Vagina (tissue), 2 donors: ENCODE measurements at regions of chr17 and their contacts with region 1.

Region 1: DNA sequence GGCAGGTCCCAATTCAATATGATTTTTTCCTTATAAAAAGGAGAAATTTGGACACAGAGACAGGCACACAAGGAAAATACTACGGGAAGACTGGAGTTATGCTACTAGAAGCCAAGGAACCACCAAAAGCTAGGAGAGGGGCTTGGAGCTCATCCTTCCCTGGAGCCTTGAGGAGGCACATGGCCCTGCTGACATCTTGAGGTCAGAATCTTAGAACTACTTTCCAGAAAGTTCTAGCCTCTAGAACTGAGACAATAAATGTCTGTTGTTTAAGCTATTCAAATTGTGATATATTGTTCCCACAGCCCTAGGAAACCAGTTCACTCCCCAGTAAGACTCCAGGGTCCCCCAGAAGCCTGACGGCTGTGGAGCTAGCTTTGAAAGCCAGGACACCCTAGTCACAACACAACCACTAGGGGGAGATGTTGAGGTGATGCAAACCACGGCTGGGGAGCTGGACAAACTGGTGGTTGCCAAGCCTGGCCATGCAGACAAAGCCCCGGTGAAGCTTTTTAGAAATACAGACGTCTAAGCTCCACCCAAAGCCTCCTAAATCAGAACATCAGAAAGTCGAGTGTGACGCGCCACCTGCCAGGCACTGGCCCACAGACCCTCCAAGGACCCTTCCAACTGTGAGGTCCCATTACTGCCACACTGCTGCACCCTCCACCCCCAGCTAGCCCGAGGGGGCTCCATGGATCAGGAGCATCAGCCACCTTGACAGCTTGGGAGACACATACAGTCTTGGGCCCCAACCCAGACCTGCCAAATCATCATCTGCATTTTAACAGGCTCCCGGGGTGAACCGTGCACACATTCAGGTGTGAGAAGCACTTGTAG is 106.4 kb downstream of the SLC39A11 start:
- DNase-seq: no peak
- H3K4me3 ChIP-seq: no peak overlapping the region
- H3K27ac ChIP-seq: no peak overlapping the region
- H3K4me1 ChIP-seq: no peaks in the 10 kb centered on the region
- H3K27me3 ChIP-seq: no peaks in the 10 kb centered on the region
- CTCF ChIP-seq: peak; percentile 59 to 63 (median 60)
- POLR2A ChIP-seq: no peak

Region 2: GRCh38 chr17:72872396-72872795 is 113.7 kb before region 1 on chr17:
- intact Hi-C with region 1: no loop called
- DNase-seq: no peak
- H3K4me3 ChIP-seq: no peak overlapping the region
- H3K27ac ChIP-seq: no peak overlapping the region
- H3K4me1 ChIP-seq: no peaks in the 10 kb centered on the region
- H3K27me3 ChIP-seq: no peaks in the 10 kb centered on the region
- CTCF ChIP-seq: no peak
- POLR2A ChIP-seq: no peak

Region 3: GRCh38 chr17:73156166-73156840 is 170.2 kb after region 1 on chr17:
- intact Hi-C with region 1: loop called (anchors 10 kb)
- DNase-seq: no peak
- H3K4me3 ChIP-seq: no peak overlapping the region
- H3K27ac ChIP-seq: no peak overlapping the region
- H3K4me1 ChIP-seq: no peaks in the 10 kb centered on the region
- H3K27me3 ChIP-seq: no peaks in the 10 kb centered on the region
- CTCF ChIP-seq: peak in 2 of 3 experiments; percentile 49 to 75
- POLR2A ChIP-seq: no peak